ENCODE measurements at regions of chr1 and their contacts with region 1.

Region 1: DNA sequence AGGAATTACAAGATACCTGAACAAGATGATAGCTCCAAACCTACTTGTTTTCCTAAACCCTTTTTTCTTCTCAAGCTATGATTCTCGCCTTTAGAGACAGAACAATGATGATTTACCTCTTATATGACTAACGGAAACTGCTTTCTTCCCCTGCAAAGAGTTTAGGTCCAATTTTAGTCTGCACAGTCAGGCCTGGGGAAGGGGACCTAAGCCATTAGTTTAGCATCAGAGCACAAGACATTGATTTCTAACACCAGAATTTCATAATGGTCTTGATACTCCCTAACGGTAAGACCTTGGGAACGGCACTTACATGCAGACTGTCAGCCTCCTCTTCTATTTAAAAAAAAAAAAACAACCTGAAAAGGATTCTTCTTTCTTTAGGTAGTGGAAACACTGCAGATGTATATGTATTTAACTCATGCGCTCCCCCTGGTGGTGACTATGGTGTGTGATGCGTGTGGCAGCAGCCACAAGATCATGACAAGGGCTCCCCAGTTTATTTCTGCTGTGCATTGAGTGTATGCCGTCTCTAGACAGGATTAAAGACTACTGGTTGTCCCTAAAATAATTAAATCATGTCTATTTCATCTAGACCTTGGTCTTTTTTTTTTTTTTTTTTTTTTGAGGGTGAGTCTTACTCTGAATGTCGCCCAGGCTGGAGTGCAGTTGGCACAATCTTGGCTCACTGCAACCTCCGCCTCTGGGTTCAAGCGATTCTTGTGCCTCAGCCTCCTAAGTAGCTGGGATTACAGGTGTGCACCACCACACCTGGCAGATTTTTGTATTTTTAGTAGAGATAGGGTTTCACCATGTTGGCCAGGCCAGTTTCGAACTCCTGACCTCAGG is 37.3 kb upstream of the TMEM222 start:
- DNase-seq: peak; percentile 88

Region 2: DNA sequence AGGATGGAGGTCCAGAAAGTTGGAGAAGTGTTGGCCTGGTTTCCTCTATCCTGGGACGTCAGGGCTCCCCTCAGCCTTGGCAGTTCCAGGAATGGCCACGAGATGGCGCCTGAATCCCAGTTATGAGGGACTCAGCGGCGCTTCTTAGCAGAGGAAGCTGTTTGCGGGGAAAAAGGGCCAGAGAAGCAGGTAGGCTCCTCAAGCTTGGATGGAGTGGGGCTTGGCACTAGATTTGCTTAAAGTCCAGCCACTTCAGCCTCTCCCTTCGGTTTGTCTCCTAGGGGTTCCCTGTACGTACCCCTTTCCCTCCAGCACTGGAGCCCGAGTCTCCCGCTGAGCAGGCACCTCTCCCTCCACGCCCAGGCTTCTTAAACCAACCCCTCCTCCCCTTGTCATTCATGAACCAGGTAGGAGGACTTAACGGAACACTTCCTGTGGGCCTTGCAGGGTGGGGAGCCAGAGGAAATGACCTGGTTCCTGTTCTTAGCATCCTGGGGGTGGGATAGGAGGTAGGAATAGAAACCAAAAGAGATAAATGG is 240.0 kb before region 1 on chr1:
- intact Hi-C with region 1: loop called (anchors 5 kb)
- DNase-seq: peak; percentile 95

Region 3: GRCh38 chr1:27102707-27103491 is 181.8 kb before region 1 on chr1:
- intact Hi-C with region 1: loop called (anchors 1 kb)
- DNase-seq: peak; percentile 91

Region 4: DNA sequence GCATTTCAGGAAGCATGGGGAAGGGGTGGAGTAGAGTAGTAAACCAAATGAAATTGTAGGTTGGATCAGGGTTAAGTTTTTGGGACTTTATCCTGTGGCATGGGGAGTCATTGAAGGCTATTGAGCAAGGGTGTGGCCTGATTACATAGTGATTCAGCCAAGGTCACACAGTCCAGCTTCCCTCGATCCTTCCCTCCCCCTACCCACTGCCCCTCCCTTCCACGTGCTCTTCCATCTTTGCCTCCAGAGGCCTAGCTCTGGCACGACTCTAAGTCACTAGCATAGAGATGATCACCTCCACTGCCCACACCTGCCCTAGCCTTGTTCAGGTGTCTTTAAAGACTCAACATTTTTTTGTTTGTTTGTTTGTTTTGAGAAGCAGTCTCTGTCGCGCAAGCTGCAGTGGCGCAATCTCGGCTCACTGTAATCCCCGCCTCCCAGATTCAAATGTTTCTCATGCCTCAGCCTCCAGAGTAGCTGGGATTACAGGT is 92.6 kb before region 1 on chr1:
- intact Hi-C with region 1: loop called (anchors 10 kb)
- DNase-seq: no peak